Ovary (tissue), 10 donors: ENCODE measurements at regions of chr1 and their contacts with region 1.

Region 1: GRCh38 chr1:46527474-46528296 is 23.8 kb downstream of the KNCN start:
- DNase-seq: peak; percentile 52 to 83 (median 64)
- H3K4me3 ChIP-seq: no peak overlapping the region
- H3K27ac ChIP-seq: no peak overlapping the region
- H3K4me1 ChIP-seq: no peaks in the 10 kb centered on the region
- H3K27me3 ChIP-seq: no peaks in the 10 kb centered on the region
- CTCF ChIP-seq: peak in 2 of 3 donors; percentile 39 to 54
- EP300 ChIP-seq: no peak
- POLR2A ChIP-seq: no peak

Region 2: GRCh38 chr1:46223472-46223943 is 304.2 kb before region 1 on chr1:
- intact Hi-C with region 1: no loop called
- DNase-seq: peak; percentile 49 to 74 (median 62)
- H3K4me3 ChIP-seq: no peak overlapping the region
- H3K27ac ChIP-seq: no peak overlapping the region
- H3K4me1 ChIP-seq: no peaks in the 10 kb centered on the region
- H3K27me3 ChIP-seq: no peaks in the 10 kb centered on the region
- CTCF ChIP-seq: peak; percentile 60 to 80 (median 79)
- EP300 ChIP-seq: no peak
- POLR2A ChIP-seq: no peak

Region 3: GRCh38 chr1:46262508-46262907 is 265.2 kb before region 1 on chr1:
- intact Hi-C with region 1: no loop called
- DNase-seq: no peak
- H3K4me3 ChIP-seq: no peak overlapping the region
- H3K27ac ChIP-seq: no peak overlapping the region
- H3K4me1 ChIP-seq: no peaks in the 10 kb centered on the region
- H3K27me3 ChIP-seq: no peaks in the 10 kb centered on the region
- CTCF ChIP-seq: no peak
- EP300 ChIP-seq: no peak
- POLR2A ChIP-seq: no peak

Region 4: DNA sequence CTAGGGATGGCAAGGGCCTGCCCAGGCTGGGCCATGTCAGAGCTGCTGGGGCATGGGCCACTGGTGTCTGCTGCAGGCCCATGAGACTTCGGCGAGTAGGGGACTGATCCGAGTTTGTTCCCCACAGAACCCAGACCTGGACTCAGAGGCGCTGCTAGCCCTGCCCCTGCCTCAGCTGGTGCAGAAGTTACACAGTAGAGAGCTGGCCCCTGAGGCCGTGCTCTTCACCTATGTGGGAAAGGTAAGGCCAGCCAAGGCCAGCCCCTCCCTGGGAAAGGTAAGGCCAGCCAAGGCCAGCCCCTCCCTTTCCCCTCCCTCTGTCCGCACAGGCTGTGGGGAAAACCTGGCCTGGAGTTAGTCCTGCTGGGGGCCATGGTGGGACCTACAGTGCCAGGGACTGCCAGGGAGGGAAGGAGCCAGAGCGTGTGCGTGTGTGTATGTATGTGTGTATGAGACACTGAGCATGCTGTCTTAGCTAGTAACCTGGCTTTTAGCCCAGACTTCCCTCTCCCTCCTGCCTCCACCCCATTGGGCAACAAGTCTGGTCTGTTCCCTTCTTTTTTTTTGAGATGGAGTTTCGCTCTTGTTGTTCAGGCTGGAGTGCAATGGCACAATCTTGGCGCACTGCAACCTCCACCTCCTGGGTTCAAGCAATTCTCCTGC is 125.6 kb before region 1 on chr1:
- intact Hi-C with region 1: loop called in 3 of 4 experiments (anchors 5 kb)
- DNase-seq: peak; percentile 51 to 68 (median 65)
- H3K4me3 ChIP-seq: no peak overlapping the region
- H3K27ac ChIP-seq: peak overlapping the region in 1 of 2 donors; percentile 40
- H3K4me1 ChIP-seq: peaks cover 3% of the 10 kb centered on the region
- H3K27me3 ChIP-seq: no peaks in the 10 kb centered on the region
- CTCF ChIP-seq: no peak
- EP300 ChIP-seq: no peak
- POLR2A ChIP-seq: no peak

Region 5: GRCh38 chr1:46446646-46447498 is 80.8 kb before region 1 on chr1:
- intact Hi-C with region 1: loop called in 1 of 4 experiments (anchors 2 kb)
- DNase-seq: peak; percentile 49 to 79 (median 65)
- H3K4me3 ChIP-seq: no peak overlapping the region
- H3K27ac ChIP-seq: no peak overlapping the region
- H3K4me1 ChIP-seq: no peaks in the 10 kb centered on the region
- H3K27me3 ChIP-seq: no peaks in the 10 kb centered on the region
- CTCF ChIP-seq: peak; percentile 20 to 44 (median 44)
- EP300 ChIP-seq: no peak
- POLR2A ChIP-seq: no peak

Region 6: GRCh38 chr1:46477153-46477929 is 50.3 kb before region 1 on chr1:
- intact Hi-C with region 1: loop called in 2 of 4 experiments (anchors 5 kb)
- DNase-seq: peak; percentile 36 to 82 (median 60)
- H3K4me3 ChIP-seq: no peak overlapping the region
- H3K27ac ChIP-seq: no peak overlapping the region
- H3K4me1 ChIP-seq: no peaks in the 10 kb centered on the region
- H3K27me3 ChIP-seq: no peaks in the 10 kb centered on the region
- CTCF ChIP-seq: peak; percentile 45 to 49 (median 48)
- EP300 ChIP-seq: no peak
- POLR2A ChIP-seq: no peak